Common myeloid progenitor, CD34-positive (primary cell): ENCODE measurements at regions of chr1 and their contacts with region 1.

Region 1: DNA sequence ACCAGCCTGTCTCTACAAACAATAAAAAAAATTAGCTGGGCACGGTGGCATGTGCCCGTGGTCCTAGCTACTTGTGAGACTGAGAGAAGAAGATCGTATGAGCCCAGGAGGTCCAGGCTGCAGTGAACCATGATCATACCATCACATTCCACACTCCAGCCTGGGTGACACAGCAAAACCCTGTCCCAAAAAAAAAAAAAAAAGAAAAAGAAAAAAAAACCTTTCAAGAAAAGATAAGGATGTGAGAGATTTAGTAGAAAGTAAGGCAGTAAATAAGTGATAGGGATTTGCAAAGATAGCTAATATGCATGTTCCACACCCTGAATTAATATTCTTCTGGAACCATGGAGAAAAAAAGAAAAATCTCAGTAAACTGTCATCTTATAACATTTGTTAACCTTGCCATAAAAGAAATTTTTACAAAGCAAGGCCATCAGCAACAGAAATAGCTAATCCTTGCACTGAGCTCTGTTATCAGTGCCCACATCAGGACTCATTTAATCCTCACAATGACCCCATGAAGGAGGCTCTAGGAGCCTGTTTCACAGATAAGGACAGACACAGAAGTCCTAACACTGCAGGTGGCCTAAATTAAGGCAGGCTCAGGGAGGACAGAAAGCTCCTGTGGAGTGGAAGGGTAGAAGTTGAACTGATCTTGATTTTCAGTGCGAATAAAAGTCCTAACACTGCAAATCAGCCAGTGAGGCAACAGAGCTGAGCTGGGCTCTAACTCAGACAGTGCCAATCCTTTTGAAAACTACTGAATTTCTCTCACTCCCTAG is 7.6 kb downstream of the GNB1 start:
- DNase-seq: no peak
- H3K4me3 ChIP-seq: no peak overlapping the region
- H3K27ac ChIP-seq: no peak overlapping the region
- H3K4me1 ChIP-seq: peaks cover 6 to 37% (median 11%) of the 10 kb centered on the region in 4 experiments
- H3K27me3 ChIP-seq: no peaks in the 10 kb centered on the region

Region 2: GRCh38 chr1:1815606-1816281 is 67.5 kb before region 1 on chr1:
- CTCF ChIA-PET with region 1: no interaction called
- POLR2A ChIA-PET with region 1: no interaction called
- DNase-seq: no peak
- H3K4me3 ChIP-seq: no peak overlapping the region
- H3K27ac ChIP-seq: no peak overlapping the region
- H3K4me1 ChIP-seq: no peaks in the 10 kb centered on the region
- H3K27me3 ChIP-seq: no peaks in the 10 kb centered on the region

Region 3: DNA sequence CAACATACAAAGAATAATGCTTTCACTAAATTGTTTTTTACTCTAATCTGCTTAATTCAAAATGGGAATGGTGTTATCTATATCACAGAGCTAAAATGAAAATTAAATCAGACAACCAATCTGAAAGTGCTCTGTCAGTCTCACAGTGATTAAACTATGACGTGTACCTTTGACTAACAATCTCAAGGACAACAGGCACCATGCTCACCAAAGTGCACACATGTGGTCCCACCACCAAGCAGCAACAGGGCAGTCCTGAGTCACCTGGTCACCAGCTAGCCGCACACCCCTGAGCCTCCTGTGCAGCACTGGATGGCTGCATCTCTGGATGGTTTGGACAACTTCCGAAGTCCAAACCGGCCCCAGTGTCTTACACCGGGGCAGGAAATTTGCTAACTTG is 50.5 kb before region 1 on chr1:
- CTCF ChIA-PET with region 1: no interaction called
- POLR2A ChIA-PET with region 1: no interaction called
- DNase-seq: no peak
- H3K4me3 ChIP-seq: no peak overlapping the region
- H3K27ac ChIP-seq: no peak overlapping the region
- H3K4me1 ChIP-seq: no peaks in the 10 kb centered on the region
- H3K27me3 ChIP-seq: no peaks in the 10 kb centered on the region

Region 4: DNA sequence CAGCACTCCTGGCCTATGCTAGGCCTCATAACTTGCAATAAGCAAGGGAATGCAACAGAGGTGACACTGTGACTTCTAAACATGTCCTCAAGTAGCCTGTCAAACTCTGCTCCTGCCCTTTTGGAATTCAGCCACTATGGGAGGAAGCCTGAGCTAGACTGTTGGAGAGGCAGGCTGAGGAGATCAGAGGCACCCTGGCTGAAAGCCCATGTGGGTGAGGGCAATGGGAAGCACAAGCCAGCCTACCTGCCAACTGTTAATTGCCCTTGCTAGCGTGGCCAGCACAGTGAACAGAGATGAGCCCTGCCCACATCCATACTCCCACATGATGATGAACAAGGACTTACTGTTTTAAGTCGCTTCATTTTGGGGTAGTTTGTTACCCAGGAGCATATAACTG is 10.1 kb before region 1 on chr1:
- CTCF ChIA-PET with region 1: interaction called, 71 read pairs
- POLR2A ChIA-PET with region 1: interaction called, 3 read pairs
- DNase-seq: no peak
- H3K4me3 ChIP-seq: no peak overlapping the region
- H3K27ac ChIP-seq: no peak overlapping the region
- H3K4me1 ChIP-seq: peaks cover 0 to 33% (median 19%) of the 10 kb centered on the region in 4 experiments
- H3K27me3 ChIP-seq: no peaks in the 10 kb centered on the region

Region 5: GRCh38 chr1:1899266-1899966 is 16.1 kb after region 1 on chr1:
- CTCF ChIA-PET with region 1: interaction called, 65 read pairs
- POLR2A ChIA-PET with region 1: interaction called, 9 read pairs
- DNase-seq: peak; percentile 67 to 88 (median 81)
- H3K4me3 ChIP-seq: peak overlapping the region in 4 of 7 experiments; percentile 26 to 55 (median 46)
- H3K27ac ChIP-seq: no peak overlapping the region
- H3K4me1 ChIP-seq: peaks cover 4 to 64% (median 59%) of the 10 kb centered on the region in 4 experiments
- H3K27me3 ChIP-seq: no peaks in the 10 kb centered on the region

Region 6: GRCh38 chr1:1906185-1907097 is 23.2 kb after region 1 on chr1:
- CTCF ChIA-PET with region 1: interaction called, 65 read pairs
- POLR2A ChIA-PET with region 1: no interaction called
- DNase-seq: peak; percentile 47 to 65 (median 58)
- H3K4me3 ChIP-seq: no peak overlapping the region
- H3K27ac ChIP-seq: no peak overlapping the region
- H3K4me1 ChIP-seq: peaks cover 0 to 35% (median 28%) of the 10 kb centered on the region in 4 experiments
- H3K27me3 ChIP-seq: no peaks in the 10 kb centered on the region